ENCODE measurements at regions of chr3 and their contacts with region 1.

Region 1: DNA sequence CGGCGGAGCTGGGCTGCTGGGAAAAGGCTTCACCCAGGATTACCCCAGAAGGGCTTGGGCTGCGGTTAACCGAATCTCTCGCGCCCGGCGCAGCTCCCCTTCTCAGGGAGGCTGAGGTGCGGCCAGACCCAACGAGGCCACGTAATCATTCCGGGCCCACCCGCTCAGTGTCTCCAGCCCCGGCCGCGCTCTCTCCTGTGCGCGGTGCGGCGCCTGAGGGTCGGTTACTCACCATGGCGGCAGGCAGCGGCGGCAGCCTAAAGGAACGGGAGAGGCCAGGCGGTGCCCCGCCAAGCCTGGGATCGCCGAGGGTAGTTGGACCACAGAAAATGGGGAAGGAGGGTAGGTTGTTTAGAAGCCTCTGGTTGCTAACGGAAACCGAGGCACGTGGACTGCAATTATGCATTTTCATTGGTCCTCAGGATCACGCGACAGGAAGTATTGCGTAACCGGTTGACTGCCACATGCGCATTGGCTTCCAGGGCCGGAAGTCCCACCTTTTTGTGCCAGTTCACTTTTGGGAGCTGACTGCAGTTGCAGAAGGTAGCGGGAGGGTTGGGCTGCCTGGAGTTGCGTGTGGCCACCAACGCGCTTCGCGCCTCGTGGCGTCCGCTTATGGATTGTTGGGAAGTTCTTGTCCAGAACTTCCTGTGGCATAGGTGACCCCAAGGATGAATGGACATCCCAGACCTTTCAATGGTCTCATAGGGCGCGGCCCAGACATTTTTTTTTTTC is at the start of gene LZTFL1:
- DNase-seq: peak; percentile 96
- H3K4me3 Mint-ChIP-seq: peak within 1 kb of the TSS; percentile 94
- H3K27ac Mint-ChIP-seq: peak within 1 kb of the TSS; percentile 86
- H3K4me1 Mint-ChIP-seq: peaks cover 19% of the 10 kb centered on the region
- H3K27me3 Mint-ChIP-seq: peaks cover 52% of the 10 kb centered on the region
- total RNA-seq, gene LZTFL1: 3.1 and 4.3 TPM in 2 replicates

Region 2: DNA sequence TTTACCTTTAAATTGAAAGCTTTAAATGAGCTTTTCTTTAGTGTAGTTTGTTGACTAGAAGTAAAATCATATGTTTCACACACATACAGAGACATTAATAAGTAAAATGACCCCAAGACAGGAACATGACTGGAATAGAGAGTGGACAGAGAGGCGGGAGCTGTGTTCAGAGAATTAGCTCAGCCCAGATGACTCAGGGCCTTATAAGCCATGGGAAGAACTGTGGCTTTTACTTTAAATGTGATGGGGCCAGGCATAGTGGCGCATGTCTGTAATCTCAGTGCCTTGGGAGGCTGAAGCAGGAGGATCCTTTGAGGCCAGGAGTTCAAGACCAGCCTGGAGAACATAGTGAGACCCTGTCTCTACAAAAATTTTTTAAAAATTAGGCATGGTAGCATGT is 126.0 kb before region 1 on chr3:
- intact Hi-C with region 1: no loop called
- DNase-seq: no peak
- H3K4me3 Mint-ChIP-seq: no peak overlapping the region
- H3K27ac Mint-ChIP-seq: no peak overlapping the region
- H3K4me1 Mint-ChIP-seq: peaks cover 22% of the 10 kb centered on the region
- H3K27me3 Mint-ChIP-seq: no peaks in the 10 kb centered on the region

Region 3: DNA sequence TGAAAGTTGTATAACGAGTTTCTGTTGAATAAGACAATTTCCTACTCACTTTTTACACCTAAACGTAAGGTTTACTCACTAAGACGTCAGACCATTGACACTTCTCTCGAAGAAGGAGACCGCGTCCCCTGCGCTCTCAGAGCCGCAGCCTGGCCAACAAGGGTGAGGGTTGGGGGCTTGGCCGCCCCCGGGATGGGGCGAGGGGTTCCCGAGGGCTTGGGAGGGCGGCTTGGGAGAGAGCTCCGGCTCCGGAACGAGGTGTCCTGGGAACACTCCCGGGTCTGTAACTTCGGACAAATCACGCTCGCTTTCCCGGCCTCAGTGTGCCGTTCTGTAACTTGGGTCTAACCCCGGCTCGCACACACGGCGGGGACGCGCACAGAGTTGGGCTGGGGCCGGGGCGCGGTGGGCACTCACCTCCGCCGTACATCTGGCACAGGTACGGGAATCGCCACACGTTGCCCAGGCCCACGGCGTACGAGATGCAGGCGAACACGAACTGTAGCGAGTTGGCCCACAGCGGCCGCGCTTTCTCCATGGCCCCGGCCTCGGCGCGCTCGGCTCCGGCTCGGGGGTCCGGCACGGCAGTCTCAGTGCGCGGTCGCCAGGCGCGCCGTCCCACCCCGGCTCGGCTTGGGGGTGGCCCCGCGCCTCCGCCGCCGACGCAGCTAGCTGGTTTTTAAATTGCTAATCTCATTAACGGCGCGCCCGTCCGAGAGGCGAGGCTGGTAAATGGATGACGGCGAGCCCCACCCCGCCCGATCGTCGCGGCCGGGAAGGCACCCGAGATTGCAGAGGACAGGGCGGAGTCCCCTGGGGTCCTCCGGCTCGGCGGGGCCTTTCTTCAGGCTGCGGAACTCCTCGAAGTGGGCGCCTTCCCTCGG is 45.8 kb before region 1 on chr3 and contains the start of gene SLC6A20:
- intact Hi-C with region 1: loop called (anchors 5 kb)
- DNase-seq: peak; percentile 65
- H3K4me3 Mint-ChIP-seq: peak within 1 kb of the TSS; percentile 66
- H3K27ac Mint-ChIP-seq: peak within 1 kb of the TSS; percentile 35
- H3K4me1 Mint-ChIP-seq: peaks cover 5% of the 10 kb centered on the region
- H3K27me3 Mint-ChIP-seq: peaks cover 81% of the 10 kb centered on the region
- total RNA-seq, gene SLC6A20: not detected in 2 replicates

Region 4: DNA sequence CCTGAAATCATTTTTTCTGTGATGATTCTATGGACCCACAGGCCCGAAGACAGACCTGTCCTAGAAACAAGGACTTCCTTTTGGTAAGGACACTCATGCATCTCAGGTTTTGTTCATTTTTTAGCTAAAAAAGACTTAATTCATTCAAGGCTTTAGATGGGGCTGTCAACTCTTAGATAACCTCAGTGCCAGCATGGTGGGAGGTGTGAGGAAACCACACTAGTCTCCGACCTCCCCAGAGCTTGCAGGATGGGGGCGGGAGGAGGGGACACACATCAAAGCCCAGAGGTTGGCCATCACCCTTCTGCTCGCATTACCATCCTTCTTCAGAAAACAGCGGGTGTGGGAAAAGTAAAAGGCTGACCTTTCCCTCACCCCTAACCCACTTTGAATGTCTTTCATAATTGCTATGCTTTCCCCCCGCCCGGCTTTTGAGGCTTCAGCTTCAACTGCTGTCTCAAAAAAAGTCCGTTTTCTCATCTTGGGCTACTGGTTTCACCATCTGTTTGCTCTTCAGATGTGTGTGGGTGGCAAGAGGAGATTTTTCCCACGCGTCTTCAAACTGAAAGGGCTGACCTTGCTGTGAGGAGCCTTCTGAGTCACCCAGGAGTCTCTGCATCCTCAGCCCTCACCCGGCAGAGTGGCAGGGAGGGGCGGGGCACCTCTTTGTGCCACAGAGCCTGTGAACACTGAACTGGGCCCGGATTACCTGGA is 73.8 kb after region 1 on chr3:
- intact Hi-C with region 1: loop called (anchors 1 kb)
- DNase-seq: peak; percentile 89
- H3K4me3 Mint-ChIP-seq: peak overlapping the region; percentile 23
- H3K27ac Mint-ChIP-seq: peak overlapping the region; percentile 49
- H3K4me1 Mint-ChIP-seq: peaks cover 29% of the 10 kb centered on the region
- H3K27me3 Mint-ChIP-seq: peaks cover 25% of the 10 kb centered on the region

Measured in activated CD4-positive, alpha-beta T cell treated with anti-CD3 and anti-CD28 coated beads, Interleukin-2, amount 10 ng/mL, durations not matched to agents 24 days and 14 days (primary cell).